Activated CD8-positive, alpha-beta T cell treated with anti-CD3 and anti-CD28 coated beads, Interleukin-2, amount 10 ng/mL, durations not matched to agents 7 days and 5 days (primary cell): ENCODE measurements at regions of chr12 and their contacts with region 1.

Region 1: GRCh38 chr12:31362759-31363415 is 36.9 kb upstream of the SINHCAF start:
- DNase-seq: peak; percentile 70
- ATAC-seq: peak; percentile 86
- H3K4me3 Mint-ChIP-seq: peak overlapping the region; percentile 49
- H3K27ac Mint-ChIP-seq: peak overlapping the region; percentile 87
- H3K4me1 Mint-ChIP-seq: peaks cover 22% of the 10 kb centered on the region
- H3K27me3 Mint-ChIP-seq: no peaks in the 10 kb centered on the region

Region 2: GRCh38 chr12:31245822-31246469 is 116.9 kb before region 1 on chr12:
- CTCF ChIA-PET with region 1: interaction called, 10 read pairs
- POLR2A ChIA-PET with region 1: no interaction called
- DNase-seq: no peak
- ATAC-seq: no peak
- H3K4me3 Mint-ChIP-seq: no peak overlapping the region
- H3K27ac Mint-ChIP-seq: no peak overlapping the region
- H3K4me1 Mint-ChIP-seq: no peaks in the 10 kb centered on the region
- H3K27me3 Mint-ChIP-seq: peaks cover under 1% of the 10 kb centered on the region

Region 3: DNA sequence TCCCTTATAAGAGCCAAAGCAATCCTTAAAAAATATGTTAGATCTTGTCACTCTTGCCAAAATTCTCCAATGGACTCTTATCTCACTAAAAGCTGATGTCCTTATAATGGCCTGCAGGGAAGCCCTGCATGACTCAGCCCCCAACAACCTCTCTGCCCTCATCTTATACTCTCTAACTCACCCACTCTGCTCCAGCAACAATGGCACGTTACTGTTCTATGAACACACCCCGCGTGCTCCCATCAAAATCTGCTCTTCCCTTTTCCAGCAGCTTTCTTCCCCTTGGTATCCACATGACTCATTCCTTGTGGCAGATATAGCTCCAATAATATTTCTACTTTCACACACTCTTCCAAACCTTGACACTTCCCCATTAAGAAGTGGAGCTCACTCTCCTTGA is 119.9 kb after region 1 on chr12:
- CTCF ChIA-PET with region 1: no interaction called
- POLR2A ChIA-PET with region 1: no interaction called
- DNase-seq: no peak
- ATAC-seq: no peak
- H3K4me3 Mint-ChIP-seq: no peak overlapping the region
- H3K27ac Mint-ChIP-seq: no peak overlapping the region
- H3K4me1 Mint-ChIP-seq: no peaks in the 10 kb centered on the region
- H3K27me3 Mint-ChIP-seq: no peaks in the 10 kb centered on the region